ENCODE measurements at regions of chr7 and their contacts with region 1.

Region 1: DNA sequence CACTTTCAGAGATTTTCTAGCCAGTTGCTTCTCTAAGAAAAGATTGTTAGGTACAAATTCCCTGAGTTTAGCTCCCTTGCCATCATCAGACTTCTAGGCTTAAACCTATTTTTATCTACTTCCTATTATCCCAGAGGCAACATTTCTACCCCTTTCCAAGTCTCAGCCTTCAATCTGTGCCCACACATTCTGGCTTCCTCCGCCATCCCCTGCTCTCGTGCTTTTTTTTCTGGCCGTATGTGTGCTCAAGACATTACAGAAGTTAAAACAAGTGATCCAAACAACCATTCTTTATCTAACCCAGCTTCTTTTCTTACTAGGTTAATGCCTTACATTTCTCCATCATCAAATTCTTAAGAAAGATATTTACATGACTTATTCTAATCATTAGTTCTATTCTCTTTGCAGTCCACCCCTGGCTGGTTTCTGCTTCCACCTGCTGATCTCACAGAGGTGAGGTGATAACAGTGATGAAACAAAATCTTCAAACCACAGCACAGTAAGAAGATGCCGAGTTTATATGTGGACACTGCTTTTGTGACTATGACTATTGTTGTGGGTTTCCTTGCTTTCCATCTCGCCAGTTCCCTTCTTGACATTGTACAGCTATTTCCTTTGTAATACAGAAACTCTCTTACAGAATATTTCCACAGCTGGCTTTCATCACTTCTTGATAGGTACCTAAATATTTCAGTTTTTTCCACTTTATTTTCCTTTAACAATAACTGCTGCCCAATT is 18.3 kb upstream of the CDK6 start:
- DNase-seq: peak; percentile 39
- H3K4me3 Mint-ChIP-seq: no peak overlapping the region
- H3K27ac Mint-ChIP-seq: peak overlapping the region; percentile 46
- H3K4me1 Mint-ChIP-seq: peaks cover 16% of the 10 kb centered on the region
- H3K27me3 Mint-ChIP-seq: peaks cover 6% of the 10 kb centered on the region

Region 2: DNA sequence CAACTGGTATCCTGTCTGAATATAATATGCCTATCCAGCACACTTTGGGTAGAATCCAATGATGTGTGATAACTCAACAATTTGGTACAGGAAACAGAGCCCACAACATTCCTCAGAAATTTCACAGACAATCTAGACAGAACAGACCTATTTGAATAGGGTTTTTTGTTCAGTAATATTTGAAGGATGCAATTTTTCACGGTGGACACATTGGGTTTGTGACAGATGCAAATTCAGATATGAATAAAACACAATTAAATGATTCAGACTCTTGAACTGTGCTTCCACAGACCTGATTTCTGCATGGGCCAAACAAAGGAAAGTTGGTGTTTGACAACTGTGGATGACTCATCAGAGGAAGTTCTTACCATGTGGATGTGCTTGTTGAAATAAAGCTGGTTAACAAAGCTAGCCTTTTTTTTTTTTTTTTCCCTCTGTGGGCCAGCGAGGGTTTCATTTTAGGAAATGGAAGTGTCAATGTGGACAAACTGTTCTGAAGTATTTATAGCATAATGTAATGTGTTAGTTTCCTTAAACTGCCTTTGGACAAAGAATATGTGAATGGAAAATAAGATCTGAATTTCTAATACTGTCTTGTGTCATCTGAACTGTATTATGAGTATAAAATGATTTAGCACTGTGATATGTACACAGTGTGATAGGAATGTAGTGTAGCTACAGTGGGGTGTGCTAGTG is 221.3 kb before region 1 on chr7:
- CTCF ChIA-PET with region 1: no interaction called
- intact Hi-C with region 1: loop called (anchors 1 kb)
- DNase-seq: peak; percentile 49
- H3K4me3 Mint-ChIP-seq: no peak overlapping the region
- H3K27ac Mint-ChIP-seq: peak overlapping the region; percentile 92
- H3K4me1 Mint-ChIP-seq: peaks cover 84% of the 10 kb centered on the region
- H3K27me3 Mint-ChIP-seq: no peaks in the 10 kb centered on the region

Region 3: GRCh38 chr7:92648067-92648466 is 206.6 kb before region 1 on chr7:
- CTCF ChIA-PET with region 1: no interaction called
- intact Hi-C with region 1: no loop called
- DNase-seq: no peak
- H3K4me3 Mint-ChIP-seq: no peak overlapping the region
- H3K27ac Mint-ChIP-seq: peak overlapping the region; percentile 88
- H3K4me1 Mint-ChIP-seq: peaks cover 89% of the 10 kb centered on the region
- H3K27me3 Mint-ChIP-seq: no peaks in the 10 kb centered on the region

Region 4: DNA sequence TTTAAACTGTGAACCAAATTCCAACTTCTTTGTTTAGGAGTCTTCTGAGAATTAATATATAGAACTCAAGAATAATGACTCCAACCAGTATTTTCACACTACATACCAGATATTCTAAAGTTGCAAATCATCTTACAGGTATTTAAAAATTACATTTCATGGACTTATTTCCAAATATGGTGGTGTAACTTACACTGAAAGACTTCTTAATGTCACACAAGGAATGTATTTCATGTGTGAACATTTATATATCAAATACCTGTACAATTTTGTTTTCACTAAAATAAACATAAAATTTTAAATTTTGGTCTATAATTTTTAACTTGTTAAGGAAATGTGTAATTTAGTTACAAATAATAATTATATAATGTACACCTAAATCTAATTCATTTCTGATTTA is 15.7 kb before region 1 on chr7:
- CTCF ChIA-PET with region 1: interaction called, 3 read pairs
- intact Hi-C with region 1: loop called (anchors 1 kb)
- DNase-seq: no peak
- H3K4me3 Mint-ChIP-seq: no peak overlapping the region
- H3K27ac Mint-ChIP-seq: no peak overlapping the region
- H3K4me1 Mint-ChIP-seq: peaks cover 11% of the 10 kb centered on the region
- H3K27me3 Mint-ChIP-seq: peaks cover 24% of the 10 kb centered on the region

Region 5: GRCh38 chr7:92944633-92945032 is 90.0 kb after region 1 on chr7:
- CTCF ChIA-PET with region 1: no interaction called
- intact Hi-C with region 1: no loop called
- DNase-seq: no peak
- H3K4me3 Mint-ChIP-seq: no peak overlapping the region
- H3K27ac Mint-ChIP-seq: no peak overlapping the region
- H3K4me1 Mint-ChIP-seq: peaks cover 10% of the 10 kb centered on the region
- H3K27me3 Mint-ChIP-seq: peaks cover 2% of the 10 kb centered on the region